ENCODE measurements at regions of chr13 and their contacts with region 1.

Region 1: DNA sequence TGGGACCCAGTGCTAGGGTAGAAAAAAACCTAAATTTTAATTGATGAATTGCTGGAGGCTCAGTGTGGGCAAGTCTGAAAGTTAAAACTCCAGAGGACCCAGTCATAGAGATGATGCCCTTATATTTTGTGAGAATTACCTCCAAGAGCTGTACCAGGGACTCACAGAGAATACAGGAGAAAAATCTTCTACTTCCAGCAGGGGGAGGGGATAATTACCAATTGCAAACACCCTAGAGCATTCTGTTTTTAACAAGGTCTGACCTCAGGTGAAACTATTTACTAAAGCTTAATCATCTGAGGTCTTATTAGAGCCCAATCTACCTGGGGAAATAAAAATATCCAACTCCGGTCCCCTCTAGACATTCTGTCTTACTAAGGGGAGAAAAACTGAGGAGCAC is 994.7 kb upstream of the MIR17HG start:
- DNase-seq: no peak
- H3K4me3 ChIP-seq: no peak overlapping the region
- H3K27ac ChIP-seq: no peak overlapping the region
- H3K4me1 ChIP-seq: no peaks in the 10 kb centered on the region
- H3K27me3 ChIP-seq: no peaks in the 10 kb centered on the region
- CTCF ChIP-seq: no peak

Region 2: DNA sequence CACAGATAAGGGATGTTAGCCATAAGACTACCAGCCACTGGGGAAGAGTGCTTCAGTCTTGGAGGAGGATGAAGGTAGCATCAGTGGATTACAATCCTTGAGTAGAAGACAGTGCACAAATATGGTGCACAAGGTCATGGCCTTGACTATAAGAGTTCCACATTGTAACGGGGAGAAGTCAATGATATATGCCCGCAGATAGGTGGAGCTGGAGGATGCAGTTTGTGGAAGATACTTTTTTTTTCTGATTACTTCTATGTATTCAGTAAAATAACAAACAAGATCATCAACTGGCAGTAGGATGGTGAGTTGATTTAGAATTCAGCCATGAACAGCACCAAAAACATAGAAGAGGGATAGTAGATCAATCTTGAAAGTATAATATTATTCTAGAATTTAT is 67.9 kb after region 1 on chr13:
- CTCF ChIA-PET with region 1: no interaction called
- POLR2A ChIA-PET with region 1: interaction called, 10 read pairs
- intact Hi-C with region 1: no loop called
- DNase-seq: no peak
- H3K4me3 ChIP-seq: no peak overlapping the region
- H3K27ac ChIP-seq: no peak overlapping the region
- H3K4me1 ChIP-seq: no peaks in the 10 kb centered on the region
- H3K27me3 ChIP-seq: no peaks in the 10 kb centered on the region
- CTCF ChIP-seq: 0 out of 2 replicates have a peak, but pooled peaks have one; percentile 27